Activated T-helper 2 cell treated with anti-CD3 and anti-CD28 coated beads, Interferon-gamma antibody, Interleukin-2, Interleukin-4, amounts not matched to agents 10 μg/mL and 5 μg/mL and 100 μg/mL, durations not matched to agents 14 hours and 24 hours and 36 hours (primary cell): ENCODE measurements at regions of chr4 and their contacts with region 1.

Region 1: DNA sequence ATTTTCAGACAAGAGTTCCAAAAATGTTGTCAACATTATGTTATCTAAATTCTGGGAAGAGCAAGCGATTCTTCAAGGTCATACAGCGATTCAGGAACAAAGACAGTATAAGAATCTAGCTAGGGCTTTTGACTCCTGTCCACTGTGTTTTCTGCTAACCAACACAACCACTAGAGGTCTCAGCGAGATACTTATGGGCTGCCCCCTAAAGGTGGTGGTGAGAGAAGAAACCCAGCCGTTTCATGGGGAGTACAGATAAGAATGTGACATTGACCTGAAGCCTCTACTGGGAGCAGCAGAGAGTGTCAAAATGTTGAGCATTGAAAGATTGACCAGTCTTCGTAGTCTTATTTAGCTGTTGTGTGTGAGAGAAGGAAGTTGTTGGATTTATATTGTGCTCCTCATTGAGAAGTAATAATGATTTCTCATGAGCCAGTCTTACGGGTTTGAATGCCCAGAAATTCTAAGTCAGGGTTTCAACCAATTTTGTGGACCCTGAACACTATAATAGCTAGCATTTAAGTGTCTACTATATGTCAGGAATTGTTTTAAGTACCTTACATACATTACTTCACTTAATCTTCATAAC is 168.3 kb downstream of the SPRY1 start:
- DNase-seq: peak; percentile 36
- H3K4me3 Mint-ChIP-seq: no peak overlapping the region
- H3K27ac Mint-ChIP-seq: no peak overlapping the region
- H3K4me1 Mint-ChIP-seq: peaks cover 9% of the 10 kb centered on the region
- H3K27me3 Mint-ChIP-seq: peaks cover 26% of the 10 kb centered on the region

Region 2: GRCh38 chr4:123659730-123660129 is 94.9 kb after region 1 on chr4:
- intact Hi-C with region 1: loop called (anchors 5 kb)
- DNase-seq: no peak
- H3K4me3 Mint-ChIP-seq: no peak overlapping the region
- H3K27ac Mint-ChIP-seq: no peak overlapping the region
- H3K4me1 Mint-ChIP-seq: peaks cover 11% of the 10 kb centered on the region
- H3K27me3 Mint-ChIP-seq: peaks cover 25% of the 10 kb centered on the region